Activated T-helper 1 cell treated with anti-CD3 and anti-CD28 coated beads, Interleukin-12 subunit alpha, Interleukin-12 subunit beta, Interleukin-2, Interleukin-4 antibody, amounts not matched to agents 30 ng/mL and 10 ng/mL and 1 ng/mL, durations not matched to agents 14 hours and 24 hours and 36 hours (primary cell): ENCODE measurements at regions of chr16 and their contacts with region 1.

Region 1: GRCh38 chr16:1420111-1420540 is 421 bp downstream of the UQCC4 start:
- DNase-seq: no peak
- H3K4me3 Mint-ChIP-seq: peak overlapping the region; percentile 91
- H3K27ac Mint-ChIP-seq: peak overlapping the region; percentile 100
- H3K4me1 Mint-ChIP-seq: peaks cover 5% of the 10 kb centered on the region
- H3K27me3 Mint-ChIP-seq: peaks cover 3% of the 10 kb centered on the region

Region 2: DNA sequence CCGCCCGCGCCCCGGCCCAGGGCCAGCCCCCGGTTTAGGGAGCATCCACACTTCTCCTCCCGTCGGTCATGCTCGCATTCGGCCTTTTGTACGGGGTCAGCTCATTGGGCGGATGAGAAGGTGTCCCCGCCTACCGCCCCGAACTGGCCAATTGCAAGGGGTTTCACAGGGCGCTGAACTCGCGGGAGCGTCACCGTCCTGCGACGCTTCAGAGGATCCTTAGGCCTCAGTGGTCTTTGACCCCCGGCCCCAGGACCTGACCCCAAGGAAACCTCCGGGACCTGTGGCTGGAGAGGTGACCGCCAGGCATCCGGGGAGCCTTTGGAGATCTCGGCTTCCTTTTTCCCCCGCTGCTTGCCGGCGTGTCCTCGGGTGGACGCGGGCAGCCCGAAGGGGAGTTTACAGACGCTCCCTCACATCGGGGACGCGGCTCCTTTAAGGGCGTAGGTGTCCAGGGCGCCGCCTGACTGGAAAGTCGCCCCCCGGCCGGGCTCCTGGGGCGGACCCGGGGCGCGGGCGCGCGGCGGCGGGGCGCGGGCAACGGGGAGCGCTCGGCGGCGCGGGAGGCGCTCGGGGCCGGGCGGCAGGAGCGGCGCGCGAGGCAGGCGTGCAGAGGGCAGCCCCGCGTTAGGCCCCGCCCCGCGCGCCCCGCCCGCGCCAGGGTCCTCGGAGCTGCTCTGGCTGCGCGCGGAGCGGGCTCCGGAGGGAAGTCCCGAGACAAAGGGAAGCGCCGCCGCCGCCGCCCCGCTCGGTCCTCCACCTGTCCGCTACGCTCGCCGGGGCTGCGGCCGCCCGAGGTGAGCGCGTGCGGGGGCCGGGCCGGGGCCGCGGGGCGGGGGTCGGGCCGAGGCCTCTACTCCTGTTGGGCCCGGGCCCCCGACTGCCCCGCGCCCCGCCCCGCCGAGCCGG is 110.9 kb before region 1 on chr16 and contains the start of gene UBE2I:
- intact Hi-C with region 1: loop called (anchors 2 kb)
- DNase-seq: peak; percentile 98
- H3K4me3 Mint-ChIP-seq: peak within 1 kb of the TSS; percentile 95
- H3K27ac Mint-ChIP-seq: peak within 1 kb of the TSS; percentile 100
- H3K4me1 Mint-ChIP-seq: peaks cover 20% of the 10 kb centered on the region
- H3K27me3 Mint-ChIP-seq: peaks cover 2% of the 10 kb centered on the region
- total RNA-seq, gene UBE2I: 257 TPM in 2 replicates

Region 3: GRCh38 chr16:1378804-1379303 is 41.3 kb before region 1 on chr16:
- intact Hi-C with region 1: loop called (anchors 1 kb)
- DNase-seq: peak; percentile 71
- H3K4me3 Mint-ChIP-seq: peak overlapping the region; percentile 83
- H3K27ac Mint-ChIP-seq: peak overlapping the region; percentile 94
- H3K4me1 Mint-ChIP-seq: peaks cover 15% of the 10 kb centered on the region
- H3K27me3 Mint-ChIP-seq: no peaks in the 10 kb centered on the region

Region 4: GRCh38 chr16:1492923-1493745 is 73.0 kb after region 1 on chr16 and contains the start of gene TELO2:
- intact Hi-C with region 1: loop called (anchors 1 kb)
- DNase-seq: peak; percentile 85
- H3K4me3 Mint-ChIP-seq: peak within 1 kb of the TSS; percentile 92
- H3K27ac Mint-ChIP-seq: peak within 1 kb of the TSS; percentile 98
- H3K4me1 Mint-ChIP-seq: peaks cover 8% of the 10 kb centered on the region
- H3K27me3 Mint-ChIP-seq: no peaks in the 10 kb centered on the region
- total RNA-seq, gene TELO2: 94.1 and 95.3 TPM in 2 replicates

Region 5: GRCh38 chr16:1543085-1543896 is 123.2 kb after region 1 on chr16:
- intact Hi-C with region 1: loop called (anchors 2 kb)
- DNase-seq: peak; percentile 38
- H3K4me3 Mint-ChIP-seq: peak overlapping the region; percentile 70
- H3K27ac Mint-ChIP-seq: peak overlapping the region; percentile 91
- H3K4me1 Mint-ChIP-seq: peaks cover 34% of the 10 kb centered on the region
- H3K27me3 Mint-ChIP-seq: no peaks in the 10 kb centered on the region

Region 6: GRCh38 chr16:1971796-1972489 is 551.8 kb after region 1 on chr16 and contains the start of gene TBL3:
- intact Hi-C with region 1: loop called (anchors 2 kb)
- DNase-seq: peak; percentile 97
- H3K4me3 Mint-ChIP-seq: peak within 1 kb of the TSS; percentile 97
- H3K27ac Mint-ChIP-seq: peak within 1 kb of the TSS; percentile 99
- H3K4me1 Mint-ChIP-seq: peaks cover 19% of the 10 kb centered on the region
- H3K27me3 Mint-ChIP-seq: no peaks in the 10 kb centered on the region
- total RNA-seq, gene TBL3: 84.9 and 87.3 TPM in 2 replicates